Naive thymus-derived CD4-positive, alpha-beta T cell (primary cell): ENCODE measurements at regions of chr4 and their contacts with region 1.

Region 1: GRCh38 chr4:88628759-88629158 is 36.5 kb downstream of the HERC3 start:
- DNase-seq: no peak
- ATAC-seq: no peak
- H3K4me3 ChIP-seq: no peak overlapping the region
- H3K4me3 Mint-ChIP-seq: peak overlapping the region in 1 of 10 donors; percentile 32
- H3K27ac ChIP-seq: no peak overlapping the region
- H3K27ac Mint-ChIP-seq: no peak overlapping the region
- H3K4me1 ChIP-seq: no peaks in the 10 kb centered on the region
- H3K4me1 Mint-ChIP-seq: peaks cover 3 to 81% (median 56%) of the 10 kb centered on the region in 7 donors
- H3K27me3 ChIP-seq: no peaks in the 10 kb centered on the region
- H3K27me3 Mint-ChIP-seq: no peaks in the 10 kb centered on the region

Region 2: DNA sequence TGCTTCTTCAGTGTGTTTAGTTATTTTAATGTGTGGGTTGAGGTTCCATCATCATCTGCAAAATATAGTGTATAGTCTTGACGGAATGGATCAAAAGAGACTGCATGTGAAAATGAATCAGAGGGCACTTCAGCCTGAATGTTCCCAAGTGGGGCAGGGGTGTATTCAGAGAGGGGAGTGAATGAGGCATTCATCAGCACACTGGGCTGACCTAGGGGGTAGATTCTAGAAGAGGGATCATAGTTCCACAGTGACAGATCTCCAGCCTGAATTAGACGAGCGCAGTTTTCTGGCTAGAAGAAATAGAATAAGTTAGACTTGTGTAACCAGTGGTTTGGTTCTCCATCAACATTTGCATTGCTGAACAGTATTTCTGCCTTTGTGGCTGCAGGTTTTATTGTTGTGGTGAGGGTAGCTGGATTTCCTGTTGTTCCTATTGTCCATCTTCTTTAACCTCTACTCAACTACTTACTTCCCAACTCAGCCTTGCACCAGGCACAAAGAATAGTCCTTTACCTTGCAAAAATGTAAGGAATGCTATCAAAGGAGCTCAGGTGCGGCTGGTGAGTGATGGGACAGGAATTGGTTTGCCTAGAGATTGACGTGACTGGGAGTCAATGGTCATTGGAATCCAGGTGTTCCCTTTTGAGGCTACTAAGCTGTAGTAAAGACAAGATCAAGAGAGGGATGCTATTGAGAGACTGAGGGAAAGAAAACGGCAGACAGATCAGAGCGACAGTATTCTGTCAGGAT is 17.9 kb after region 1 on chr4:
- CTCF ChIA-PET with region 1: no interaction called
- POLR2A ChIA-PET with region 1: no interaction called
- intact Hi-C with region 1: loop called in 1 of 2 experiments (anchors 2 kb)
- DNase-seq: no peak
- ATAC-seq: no peak
- H3K4me3 ChIP-seq: no peak overlapping the region
- H3K4me3 Mint-ChIP-seq: peak overlapping the region in 5 of 10 donors; percentile 5 to 45 (median 14)
- H3K27ac ChIP-seq: no peak overlapping the region
- H3K27ac Mint-ChIP-seq: peak overlapping the region in 8 of 9 donors; percentile 6 to 83 (median 54)
- H3K4me1 ChIP-seq: peaks cover 0 to 26% of the 10 kb centered on the region in 2 donors
- H3K4me1 Mint-ChIP-seq: peaks cover 11 to 81% (median 69%) of the 10 kb centered on the region in 7 donors
- H3K27me3 ChIP-seq: no peaks in the 10 kb centered on the region
- H3K27me3 Mint-ChIP-seq: no peaks in the 10 kb centered on the region